PC-3 (cell line): ENCODE measurements at regions of chr7 and their contacts with region 1.

Region 1: DNA sequence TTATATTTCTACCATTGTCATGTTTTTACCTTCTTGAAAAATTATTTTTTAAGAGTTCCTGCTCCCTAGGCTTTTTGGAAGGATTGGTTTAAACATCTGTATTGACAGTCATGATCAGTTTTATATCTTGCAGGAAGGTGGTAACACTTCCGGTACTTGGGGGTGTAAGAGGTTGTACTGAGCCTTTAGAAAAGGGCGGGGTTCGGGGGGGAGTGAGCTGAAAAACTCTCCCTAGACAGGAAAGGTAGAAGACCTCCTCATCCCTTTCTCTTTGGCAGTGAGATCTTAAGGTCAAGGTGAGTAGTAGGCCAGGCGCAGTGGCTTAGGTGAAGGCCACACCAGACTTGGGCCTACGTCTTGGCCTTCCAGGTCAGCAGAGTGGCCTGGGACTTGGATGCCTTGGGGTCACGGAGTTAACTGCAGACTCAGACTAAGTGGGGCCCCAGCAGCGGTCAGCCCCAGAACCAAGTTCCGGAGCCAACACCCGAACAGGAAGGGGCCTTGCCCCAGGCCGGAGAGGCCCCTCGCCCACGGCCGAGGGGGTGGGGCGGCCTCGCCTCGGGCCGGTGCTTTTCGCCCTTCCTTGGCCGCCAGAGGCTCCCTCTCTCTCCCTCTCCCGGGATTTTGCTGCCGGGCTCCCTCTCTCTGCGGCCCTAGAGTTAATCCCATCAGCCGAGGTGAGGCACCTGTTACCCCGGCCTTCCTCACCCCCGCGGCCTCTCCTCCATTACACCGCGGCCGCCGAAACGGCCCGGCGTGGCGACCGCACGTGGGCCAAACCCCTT is at the start of gene PPP1R9A:
- DNase-seq: peak; percentile 65
- ATAC-seq: peak; percentile 80
- H3K4me3 ChIP-seq: peak within 1 kb of the TSS; percentile 95
- H3K27ac ChIP-seq: no peak within 1 kb of the TSS
- H3K4me1 ChIP-seq: peaks cover 10% of the 10 kb centered on the region
- H3K27me3 ChIP-seq: no peaks in the 10 kb centered on the region
- CTCF ChIP-seq: peak; percentile 53
- total RNA-seq, gene PPP1R9A: 5.9 and 9.5 TPM in 2 replicates

Region 2: DNA sequence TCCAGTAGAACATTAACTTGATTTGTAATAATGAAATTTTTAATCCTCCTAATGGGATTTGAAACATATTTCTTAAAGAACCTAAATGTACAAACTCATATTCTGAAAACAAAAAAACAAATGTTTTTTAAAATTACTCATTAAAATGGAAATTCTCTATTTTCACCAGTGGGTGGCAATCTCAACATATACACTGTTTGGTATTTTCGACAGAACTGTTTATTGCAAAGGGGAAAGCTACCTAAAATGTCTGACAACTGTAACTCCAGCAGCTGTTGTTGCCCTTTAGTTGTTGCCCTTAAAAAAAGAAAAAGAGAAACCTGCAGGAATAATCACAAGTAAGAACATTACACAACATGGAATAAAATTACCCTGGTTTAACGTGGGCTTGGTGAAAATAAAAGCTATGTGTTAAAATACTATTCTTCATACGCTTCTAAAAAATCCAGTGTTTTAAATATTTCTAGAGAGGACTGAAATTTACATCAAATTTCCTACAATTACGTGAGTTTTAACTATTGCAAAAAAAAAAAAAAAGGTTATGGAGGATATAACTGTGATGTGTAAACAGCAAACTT is 458.0 kb before region 1 on chr7:
- CTCF ChIA-PET with region 1: no interaction called
- POLR2A ChIA-PET with region 1: no interaction called
- intact Hi-C with region 1: loop called (anchors 10 kb)
- DNase-seq: peak; percentile 58
- ATAC-seq: peak; percentile 48
- H3K4me3 ChIP-seq: no peak overlapping the region
- H3K27ac ChIP-seq: no peak overlapping the region
- H3K4me1 ChIP-seq: peaks cover 4% of the 10 kb centered on the region; the same call in 1 of the 2 replicates
- H3K27me3 ChIP-seq: no peaks in the 10 kb centered on the region
- CTCF ChIP-seq: peak; percentile 76

Region 3: DNA sequence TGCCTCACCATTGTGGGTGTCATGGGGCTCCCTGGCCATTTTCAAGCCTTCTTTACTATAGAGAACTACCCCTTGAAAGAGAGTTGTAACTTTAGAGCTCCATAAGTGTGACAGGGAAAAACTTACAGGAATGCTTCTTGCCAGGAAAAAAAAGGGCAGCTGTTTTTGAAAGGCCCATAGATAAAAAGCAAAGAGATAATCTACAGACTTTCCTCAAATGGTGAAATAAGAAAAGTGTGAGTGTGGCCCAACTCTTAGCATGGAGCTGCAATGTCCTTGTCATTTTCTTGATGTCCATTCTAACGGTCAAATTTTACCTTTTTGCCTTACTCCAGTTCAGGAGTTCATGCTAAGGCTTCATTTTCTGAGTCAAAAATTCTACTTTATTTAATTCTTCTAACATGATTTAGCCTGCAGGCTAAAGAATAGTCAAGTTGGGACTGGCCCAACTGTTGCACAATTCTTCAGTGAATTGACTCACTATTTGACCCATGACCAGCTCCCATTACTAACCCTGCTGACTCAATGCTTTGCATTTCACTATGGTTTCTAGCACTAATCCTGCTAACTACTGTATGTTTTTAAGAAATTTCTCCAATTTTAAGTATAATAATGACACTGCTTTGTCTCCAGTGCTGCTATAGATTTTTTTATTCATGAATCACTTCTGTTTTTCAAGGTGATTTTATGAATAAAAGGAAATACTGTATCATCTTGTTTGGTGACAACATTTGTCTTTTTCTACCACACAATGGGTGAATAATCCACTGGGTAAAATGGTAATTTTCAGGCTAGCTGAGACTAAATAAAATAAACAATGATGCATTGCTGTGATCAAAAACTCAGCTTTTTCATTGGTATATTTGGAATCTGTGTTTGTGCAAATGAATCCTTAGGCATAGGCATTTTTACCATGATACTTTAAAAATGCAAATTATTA is 209.9 kb before region 1 on chr7:
- CTCF ChIA-PET with region 1: no interaction called
- POLR2A ChIA-PET with region 1: no interaction called
- intact Hi-C with region 1: loop called (anchors 2 kb)
- DNase-seq: peak; percentile 96
- ATAC-seq: peak; percentile 66
- H3K4me3 ChIP-seq: peak overlapping the region; percentile 51
- H3K27ac ChIP-seq: peak overlapping the region; percentile 85
- H3K4me1 ChIP-seq: peaks cover 40% of the 10 kb centered on the region
- H3K27me3 ChIP-seq: no peaks in the 10 kb centered on the region
- CTCF ChIP-seq: no peak

Region 4: GRCh38 chr7:94975336-94975735 is 68.1 kb after region 1 on chr7:
- CTCF ChIA-PET with region 1: no interaction called
- POLR2A ChIA-PET with region 1: no interaction called
- intact Hi-C with region 1: loop called (anchors 2 kb)
- DNase-seq: peak; percentile 71
- ATAC-seq: peak; percentile 69
- H3K4me3 ChIP-seq: peak overlapping the region; percentile 6; the same call in 1 of the 2 replicates
- H3K27ac ChIP-seq: peak overlapping the region; percentile 27
- H3K4me1 ChIP-seq: peaks cover 53% of the 10 kb centered on the region
- H3K27me3 ChIP-seq: no peaks in the 10 kb centered on the region
- CTCF ChIP-seq: no peak

Region 5: DNA sequence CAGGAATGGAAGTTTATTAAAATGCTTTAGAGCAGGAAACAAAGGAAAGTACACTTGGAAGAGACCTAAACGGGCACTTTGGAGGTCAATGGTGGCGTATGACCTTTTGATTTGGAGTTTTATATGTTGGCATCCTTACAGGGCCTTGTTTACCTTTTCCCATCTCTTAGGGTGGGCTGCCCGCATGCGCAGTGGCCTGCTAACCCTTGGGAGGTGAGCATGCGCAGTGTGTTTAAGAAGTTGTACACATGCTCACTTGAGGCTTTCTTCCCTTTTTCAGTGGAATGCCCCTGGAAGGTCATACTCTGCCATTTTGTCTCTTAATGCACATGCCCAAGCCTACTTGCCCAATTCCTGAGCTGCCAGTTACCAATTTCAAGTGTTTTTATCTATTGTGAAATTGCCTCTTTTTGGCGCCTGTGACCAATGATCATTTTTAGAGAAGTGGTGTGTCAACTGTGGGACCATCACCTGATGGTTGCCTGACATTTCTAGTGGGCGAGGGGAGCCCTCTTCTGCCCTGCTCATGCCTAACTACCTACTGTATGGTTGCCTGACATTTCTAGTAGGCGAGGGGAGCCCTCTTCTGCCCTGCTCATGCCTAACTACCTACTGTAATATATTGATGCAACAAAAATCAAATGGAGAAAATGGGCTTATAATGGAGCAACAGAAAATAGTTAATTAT is 138.2 kb after region 1 on chr7:
- CTCF ChIA-PET with region 1: no interaction called
- POLR2A ChIA-PET with region 1: no interaction called
- intact Hi-C with region 1: loop called (anchors 2 kb)
- DNase-seq: peak; percentile 66
- ATAC-seq: peak; percentile 99
- H3K4me3 ChIP-seq: no peak overlapping the region
- H3K27ac ChIP-seq: no peak overlapping the region
- H3K4me1 ChIP-seq: no peaks in the 10 kb centered on the region
- H3K27me3 ChIP-seq: no peaks in the 10 kb centered on the region
- CTCF ChIP-seq: peak; percentile 74

Region 6: DNA sequence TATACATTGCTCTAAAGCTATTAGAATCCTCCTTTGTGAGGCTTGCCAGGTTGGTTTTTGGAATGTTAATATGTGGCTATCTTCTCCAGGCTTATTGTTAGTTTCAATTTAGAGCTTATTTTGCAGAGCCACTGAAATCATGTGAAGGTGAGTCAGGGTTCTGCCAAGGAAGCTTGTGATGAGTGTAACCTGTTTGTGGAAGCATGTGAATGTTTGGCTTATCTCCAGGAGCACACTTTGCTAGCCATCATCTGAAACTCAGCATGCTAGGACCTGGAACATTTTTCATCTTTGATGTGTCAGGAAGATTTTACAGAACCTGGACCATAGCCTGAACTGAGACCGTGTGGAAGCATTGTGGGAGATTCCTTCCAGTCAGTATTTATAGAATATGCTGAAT is 197.5 kb after region 1 on chr7:
- CTCF ChIA-PET with region 1: no interaction called
- POLR2A ChIA-PET with region 1: no interaction called
- intact Hi-C with region 1: loop called (anchors 5 kb)
- DNase-seq: peak; percentile 76
- ATAC-seq: peak; percentile 60
- H3K4me3 ChIP-seq: no peak overlapping the region
- H3K27ac ChIP-seq: peak overlapping the region; percentile 43
- H3K4me1 ChIP-seq: peaks cover 37% of the 10 kb centered on the region
- H3K27me3 ChIP-seq: no peaks in the 10 kb centered on the region
- CTCF ChIP-seq: no peak